PC-9 (cell line): ENCODE measurements at regions of chr4 and their contacts with region 1.

Region 1: DNA sequence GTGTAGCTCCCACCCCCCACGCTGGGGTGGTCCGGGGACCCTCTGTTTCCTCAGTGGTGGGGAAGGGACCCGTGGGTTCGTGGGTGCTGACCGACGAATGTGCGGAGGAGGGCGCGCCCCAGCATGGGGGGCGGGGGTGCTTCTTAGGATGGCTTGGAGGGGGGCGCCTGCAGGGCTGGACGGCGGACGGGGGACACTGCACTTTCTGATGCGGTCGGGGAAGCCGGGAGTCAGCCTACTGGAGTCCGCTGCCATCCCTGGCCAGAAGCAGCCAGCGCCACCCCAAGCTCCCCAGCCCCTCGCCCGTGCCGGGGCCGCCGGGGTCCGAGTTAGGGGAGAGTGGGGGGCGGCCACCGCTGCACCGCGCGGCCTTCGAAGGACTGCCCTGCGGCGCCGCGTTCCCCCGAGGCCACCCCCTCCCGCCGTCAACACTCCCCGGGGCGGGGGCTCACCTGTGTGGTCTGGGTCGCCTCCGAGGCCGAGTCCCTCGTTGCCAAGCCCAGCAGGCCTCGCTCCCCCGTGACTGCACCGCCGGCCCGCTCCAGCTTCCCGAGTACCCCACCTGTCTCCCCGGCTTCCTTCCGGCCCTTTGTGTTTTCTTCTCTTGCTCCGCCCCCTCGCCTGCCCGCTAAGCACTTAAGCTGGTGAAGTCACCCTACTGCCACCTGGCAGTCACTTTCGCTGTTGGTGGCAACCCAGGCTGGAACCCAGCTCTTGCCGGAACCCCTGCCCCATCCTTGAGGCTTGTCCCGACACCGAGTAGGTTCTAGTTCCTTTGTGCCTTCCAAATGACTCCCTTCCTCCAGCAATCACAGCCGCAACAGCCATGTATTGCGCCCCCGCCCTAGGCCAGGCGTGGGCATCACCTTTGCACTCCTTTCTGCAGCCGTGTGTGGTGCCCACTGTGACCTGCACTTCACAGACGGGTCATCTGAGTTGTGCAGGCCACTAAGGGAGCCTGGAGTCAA is at the start of gene OCIAD2:
- DNase-seq: peak; percentile 71 to 80
- H3K4me3 ChIP-seq: peak within 1 kb of the TSS; percentile 90
- H3K27ac ChIP-seq: peak within 1 kb of the TSS; percentile 20; the same call in 1 of the 2 replicates
- H3K4me1 ChIP-seq: peaks cover 34% of the 10 kb centered on the region
- H3K27me3 ChIP-seq: no peaks in the 10 kb centered on the region
- CTCF ChIP-seq: no peak; the same call in 1 of the 2 replicates
- total RNA-seq, gene OCIAD2: 133 and 136 TPM in 2 replicates

Region 2: GRCh38 chr4:48653217-48654014 is 253.1 kb before region 1 on chr4:
- CTCF ChIA-PET with region 1: no interaction called
- POLR2A ChIA-PET with region 1: no interaction called
- intact Hi-C with region 1: no loop called
- DNase-seq: no peak
- H3K4me3 ChIP-seq: no peak overlapping the region
- H3K27ac ChIP-seq: no peak overlapping the region
- H3K4me1 ChIP-seq: no peaks in the 10 kb centered on the region
- H3K27me3 ChIP-seq: no peaks in the 10 kb centered on the region
- CTCF ChIP-seq: no peak

Region 3: GRCh38 chr4:48841045-48841827 is 65.3 kb before region 1 on chr4:
- CTCF ChIA-PET with region 1: no interaction called
- POLR2A ChIA-PET with region 1: no interaction called
- intact Hi-C with region 1: no loop called
- DNase-seq: no peak
- H3K4me3 ChIP-seq: no peak overlapping the region
- H3K27ac ChIP-seq: no peak overlapping the region
- H3K4me1 ChIP-seq: no peaks in the 10 kb centered on the region
- H3K27me3 ChIP-seq: no peaks in the 10 kb centered on the region
- CTCF ChIP-seq: no peak

Region 4: DNA sequence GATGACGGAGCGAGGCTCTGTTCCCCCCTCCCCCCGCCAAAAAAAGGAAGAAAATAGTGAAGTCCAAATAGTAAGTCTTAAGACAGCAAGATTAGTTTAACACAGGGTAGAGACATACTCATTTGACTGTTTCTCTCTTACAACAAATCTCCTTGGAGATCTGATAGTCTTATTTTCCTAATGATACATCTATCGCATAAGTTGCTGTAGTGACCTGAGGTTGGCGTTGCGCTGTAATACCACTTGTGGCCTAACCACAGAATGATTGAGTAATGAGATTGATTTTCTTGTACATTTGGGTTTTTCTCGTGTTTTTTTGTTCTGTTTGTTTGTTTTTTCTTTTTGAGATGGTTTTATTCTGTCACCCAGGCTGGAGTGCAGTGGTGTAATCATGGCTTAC is 48.4 kb before region 1 on chr4:
- CTCF ChIA-PET with region 1: no interaction called
- POLR2A ChIA-PET with region 1: no interaction called
- intact Hi-C with region 1: loop called (anchors 10 kb)
- DNase-seq: no peak
- H3K4me3 ChIP-seq: no peak overlapping the region
- H3K27ac ChIP-seq: no peak overlapping the region
- H3K4me1 ChIP-seq: no peaks in the 10 kb centered on the region
- H3K27me3 ChIP-seq: no peaks in the 10 kb centered on the region
- CTCF ChIP-seq: no peak

Region 5: GRCh38 chr4:48877827-48878533 is 28.5 kb before region 1 on chr4:
- CTCF ChIA-PET with region 1: no interaction called
- POLR2A ChIA-PET with region 1: no interaction called
- intact Hi-C with region 1: no loop called
- DNase-seq: peak in 1 of 2 experiments; percentile 25
- H3K4me3 ChIP-seq: no peak overlapping the region
- H3K27ac ChIP-seq: no peak overlapping the region
- H3K4me1 ChIP-seq: no peaks in the 10 kb centered on the region
- H3K27me3 ChIP-seq: no peaks in the 10 kb centered on the region
- CTCF ChIP-seq: no peak

Region 6: GRCh38 chr4:48939785-48940184 is 33.3 kb after region 1 on chr4:
- CTCF ChIA-PET with region 1: interaction called, 17 read pairs
- POLR2A ChIA-PET with region 1: no interaction called
- intact Hi-C with region 1: loop called (anchors 1 kb)
- DNase-seq: peak; percentile 64 to 72
- H3K4me3 ChIP-seq: no peak overlapping the region
- H3K27ac ChIP-seq: peak overlapping the region; percentile 57
- H3K4me1 ChIP-seq: peaks cover 22% of the 10 kb centered on the region
- H3K27me3 ChIP-seq: no peaks in the 10 kb centered on the region
- CTCF ChIP-seq: no peak

Region 7: GRCh38 chr4:48944756-48945241 is 38.3 kb after region 1 on chr4:
- CTCF ChIA-PET with region 1: interaction called, 10 read pairs
- POLR2A ChIA-PET with region 1: no interaction called
- intact Hi-C with region 1: loop called (anchors 1 kb)
- DNase-seq: peak in 1 of 2 experiments; percentile 28
- H3K4me3 ChIP-seq: peak overlapping the region; percentile 12; the same call in 1 of the 2 replicates
- H3K27ac ChIP-seq: peak overlapping the region; percentile 50
- H3K4me1 ChIP-seq: peaks cover 16% of the 10 kb centered on the region
- H3K27me3 ChIP-seq: no peaks in the 10 kb centered on the region
- CTCF ChIP-seq: peak; percentile 51

Region 8: DNA sequence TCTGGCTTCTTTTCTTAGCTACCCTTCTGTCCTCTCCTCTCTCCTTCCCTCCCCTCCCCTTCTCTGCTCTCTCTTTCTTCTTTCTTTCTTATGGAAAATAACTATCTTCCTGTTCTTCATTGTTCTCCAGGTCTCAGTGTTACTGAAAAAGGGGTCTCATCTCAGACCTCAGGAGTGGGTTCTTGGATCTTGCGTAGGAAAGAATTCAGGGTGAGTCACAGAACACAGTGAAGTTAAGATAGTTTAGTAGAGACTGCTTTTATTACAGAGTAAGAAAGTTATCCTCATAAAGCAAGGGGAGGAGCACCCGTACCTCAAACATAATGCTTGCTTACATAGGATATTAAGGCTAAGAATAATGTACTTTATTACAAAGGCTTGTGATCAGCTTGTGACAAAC is 47.8 kb after region 1 on chr4:
- CTCF ChIA-PET with region 1: no interaction called
- POLR2A ChIA-PET with region 1: no interaction called
- intact Hi-C with region 1: loop called (anchors 2 kb)
- DNase-seq: no peak
- H3K4me3 ChIP-seq: peak overlapping the region; percentile 9; the same call in 1 of the 2 replicates
- H3K27ac ChIP-seq: peak overlapping the region; percentile 85
- H3K4me1 ChIP-seq: peaks cover 33% of the 10 kb centered on the region
- H3K27me3 ChIP-seq: no peaks in the 10 kb centered on the region
- CTCF ChIP-seq: no peak

Region 9: GRCh38 chr4:48963042-48963679 is 56.7 kb after region 1 on chr4:
- CTCF ChIA-PET with region 1: no interaction called
- POLR2A ChIA-PET with region 1: no interaction called
- intact Hi-C with region 1: loop called (anchors 1 kb)
- DNase-seq: peak; percentile 63 to 67
- H3K4me3 ChIP-seq: no peak overlapping the region
- H3K27ac ChIP-seq: no peak overlapping the region
- H3K4me1 ChIP-seq: peaks cover 21% of the 10 kb centered on the region
- H3K27me3 ChIP-seq: no peaks in the 10 kb centered on the region
- CTCF ChIP-seq: peak; percentile 97